ENCODE measurements at regions of chr6 and their contacts with region 1.

Region 1: DNA sequence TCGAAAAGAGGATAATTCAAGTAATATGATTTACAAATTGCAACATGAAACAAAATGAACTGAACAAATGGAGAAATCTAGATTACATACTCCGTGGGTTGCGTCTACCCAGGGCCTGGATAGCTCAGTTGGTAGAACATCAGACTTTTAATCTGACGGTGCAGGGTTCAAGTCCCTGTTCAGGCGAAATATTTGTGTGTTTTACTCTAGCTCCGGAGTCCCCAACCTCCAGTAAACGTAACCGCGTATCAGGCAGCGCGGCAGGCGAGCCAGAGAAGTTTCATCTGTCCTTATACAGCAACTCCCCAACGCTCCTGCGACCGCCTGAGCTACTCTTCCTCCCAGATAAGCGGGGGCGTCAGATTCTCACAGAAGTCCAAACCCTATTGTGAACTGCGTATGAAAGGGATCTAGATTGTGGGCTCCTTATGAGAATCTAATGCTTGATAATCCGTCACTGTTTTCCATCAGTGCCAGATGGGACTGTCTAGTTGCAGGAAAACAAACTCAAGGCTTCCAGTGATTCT is 176.1 kb downstream of the TRIM27 start:
- DNase-seq: no peak
- ATAC-seq: no peak
- H3K4me3 ChIP-seq: no peak overlapping the region
- H3K4me3 Mint-ChIP-seq: no peak overlapping the region
- H3K27ac ChIP-seq: no peak overlapping the region
- H3K27ac Mint-ChIP-seq: no peak overlapping the region
- H3K4me1 ChIP-seq: no peaks in the 10 kb centered on the region
- H3K4me1 Mint-ChIP-seq: no peaks in the 10 kb centered on the region
- H3K27me3 ChIP-seq: peaks cover 36 to 62% of the 10 kb centered on the region in 2 experiments
- H3K27me3 Mint-ChIP-seq: peaks cover 92% of the 10 kb centered on the region
- CTCF ChIP-seq: no peak

Region 2: DNA sequence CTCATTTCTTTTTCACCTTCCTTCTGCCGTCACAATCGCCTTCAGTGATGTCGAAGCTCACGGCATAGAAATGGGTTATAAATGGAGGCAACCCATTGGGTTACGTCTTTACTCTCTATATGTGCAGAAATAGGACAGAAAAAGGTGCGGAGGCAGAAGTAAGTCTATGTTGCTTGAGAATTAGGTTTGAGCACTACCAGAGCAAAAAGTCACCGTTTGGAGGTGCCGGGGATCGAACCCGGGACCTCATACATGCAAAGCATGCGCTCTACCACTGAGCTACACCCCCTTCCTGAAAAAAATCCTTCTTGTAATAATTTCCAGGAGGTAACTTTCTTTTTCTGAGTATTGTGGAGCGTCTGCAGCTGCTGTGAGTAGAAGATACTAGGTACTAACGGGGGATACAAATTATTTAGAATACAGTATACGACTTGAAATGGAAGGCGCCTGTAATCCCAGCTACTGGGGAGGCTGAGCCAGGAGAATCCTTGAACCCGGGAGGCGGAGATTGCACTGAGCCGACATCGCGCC is 41.9 kb after region 1 on chr6:
- CTCF ChIA-PET with region 1: no interaction called
- POLR2A ChIA-PET with region 1: no interaction called
- intact Hi-C with region 1: loop called in 1 of 2 experiments (anchors 10 kb)
- DNase-seq: no peak
- ATAC-seq: no peak
- H3K4me3 ChIP-seq: no peak overlapping the region
- H3K4me3 Mint-ChIP-seq: no peak overlapping the region
- H3K27ac ChIP-seq: no peak overlapping the region
- H3K27ac Mint-ChIP-seq: no peak overlapping the region
- H3K4me1 ChIP-seq: peaks cover 3% of the 10 kb centered on the region
- H3K4me1 Mint-ChIP-seq: peaks cover 13% of the 10 kb centered on the region
- H3K27me3 ChIP-seq: peaks cover 91 to 98% of the 10 kb centered on the region in 2 experiments
- H3K27me3 Mint-ChIP-seq: peaks cover 99% of the 10 kb centered on the region
- CTCF ChIP-seq: no peak

Region 3: DNA sequence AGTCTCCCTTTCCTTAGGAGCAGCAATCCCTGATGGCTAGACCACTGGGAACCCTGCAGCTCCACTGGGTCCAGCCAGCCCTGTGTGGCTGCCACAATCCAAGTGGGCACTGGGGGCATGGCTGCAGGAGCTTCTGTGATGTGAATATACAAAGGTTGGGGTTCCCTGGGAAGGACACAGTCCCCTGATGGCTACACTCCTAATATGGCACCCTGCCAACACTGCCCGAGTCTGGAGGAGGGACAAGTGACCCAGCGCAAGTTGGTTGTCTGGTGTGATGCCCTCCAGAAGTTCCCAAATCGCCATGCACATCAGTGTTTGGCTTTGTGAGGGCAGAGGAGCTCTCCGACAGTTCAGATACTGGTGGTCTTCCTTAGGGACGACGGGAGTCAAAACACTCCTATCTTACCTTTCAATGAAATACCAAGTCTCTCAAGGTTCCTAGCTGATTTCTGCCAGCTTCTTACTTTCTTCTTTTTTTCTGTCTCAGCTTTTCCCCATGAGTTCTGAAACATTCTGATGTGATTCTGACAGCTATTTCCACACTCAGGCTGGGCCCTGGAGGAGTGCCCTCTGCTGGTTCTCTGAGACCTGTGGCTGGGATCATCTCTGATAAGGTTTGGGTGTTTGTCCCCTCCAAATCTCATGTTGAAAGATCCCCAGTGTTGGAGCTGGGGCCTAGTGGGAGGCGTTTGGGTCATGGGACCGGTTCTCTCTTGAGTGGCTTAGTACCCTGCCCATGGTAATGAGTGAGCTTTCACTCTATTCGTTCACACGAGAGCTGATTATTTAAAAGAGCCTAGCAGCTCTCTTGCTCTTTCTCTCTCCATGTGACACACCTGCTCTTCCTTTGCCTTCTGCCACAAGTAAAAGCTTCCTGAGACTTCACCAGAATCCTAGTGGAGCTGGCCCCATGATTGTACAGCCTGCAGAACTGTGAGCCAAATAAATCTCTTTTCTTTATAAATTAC is 948.7 kb after region 1 on chr6:
- CTCF ChIA-PET with region 1: no interaction called
- POLR2A ChIA-PET with region 1: no interaction called
- intact Hi-C with region 1: no loop called
- DNase-seq: no peak
- ATAC-seq: no peak
- H3K4me3 ChIP-seq: no peak overlapping the region
- H3K4me3 Mint-ChIP-seq: no peak overlapping the region
- H3K27ac ChIP-seq: no peak overlapping the region
- H3K27ac Mint-ChIP-seq: no peak overlapping the region
- H3K4me1 ChIP-seq: no peaks in the 10 kb centered on the region
- H3K4me1 Mint-ChIP-seq: no peaks in the 10 kb centered on the region
- H3K27me3 ChIP-seq: peaks cover 3 to 4% of the 10 kb centered on the region in 2 experiments
- H3K27me3 Mint-ChIP-seq: peaks cover 17% of the 10 kb centered on the region
- CTCF ChIP-seq: no peak

Region 4: GRCh38 chr6:30493643-30494250 is 1746.1 kb after region 1 on chr6:
- CTCF ChIA-PET with region 1: no interaction called
- POLR2A ChIA-PET with region 1: no interaction called
- intact Hi-C with region 1: no loop called
- DNase-seq: peak in 10 of 14 experiments; percentile 31 to 68 (median 51)
- ATAC-seq: no peak
- H3K4me3 ChIP-seq: peak overlapping the region; percentile 83
- H3K4me3 Mint-ChIP-seq: peak overlapping the region; percentile 84
- H3K27ac ChIP-seq: peak overlapping the region in 1 of 2 donors; percentile 65
- H3K27ac Mint-ChIP-seq: peak overlapping the region; percentile 98
- H3K4me1 ChIP-seq: peaks cover 72% of the 10 kb centered on the region
- H3K4me1 Mint-ChIP-seq: peaks cover 84% of the 10 kb centered on the region
- H3K27me3 ChIP-seq: no peaks in the 10 kb centered on the region
- H3K27me3 Mint-ChIP-seq: no peaks in the 10 kb centered on the region
- CTCF ChIP-seq: peak; percentile 31